ENCODE measurements at regions of chr10 and their contacts with region 1.

Region 1: DNA sequence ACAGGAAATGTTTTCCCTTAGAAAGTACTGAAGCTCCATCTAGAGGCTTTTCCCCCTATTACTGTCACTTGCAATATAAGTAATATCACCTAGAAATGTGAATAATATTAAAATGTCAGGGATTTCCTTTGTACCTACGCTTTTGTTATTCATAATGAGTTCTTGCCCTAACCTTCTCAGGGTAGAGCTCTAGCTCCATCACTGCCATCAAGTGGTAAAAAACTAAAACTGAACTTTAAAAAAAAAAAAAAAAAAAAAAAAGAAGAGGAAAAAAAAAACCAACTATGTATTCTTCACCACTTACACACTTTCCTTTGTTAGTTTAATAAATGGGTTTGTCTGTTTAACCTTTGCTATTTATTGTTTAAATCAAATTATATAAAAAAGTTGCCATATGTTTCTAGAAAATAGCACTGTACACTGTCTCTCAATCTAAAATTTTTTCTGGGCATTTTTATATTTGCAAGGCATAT is 49.9 kb downstream of the DNAJC1 start:
- DNase-seq: peak in 1 of 2 experiments; percentile 79
- H3K4me3 ChIP-seq: no peak overlapping the region
- H3K27ac ChIP-seq: no peak overlapping the region
- H3K4me1 ChIP-seq: no peaks in the 10 kb centered on the region
- H3K27me3 ChIP-seq: no peaks in the 10 kb centered on the region
- CTCF ChIP-seq: peak; percentile 62

Region 2: DNA sequence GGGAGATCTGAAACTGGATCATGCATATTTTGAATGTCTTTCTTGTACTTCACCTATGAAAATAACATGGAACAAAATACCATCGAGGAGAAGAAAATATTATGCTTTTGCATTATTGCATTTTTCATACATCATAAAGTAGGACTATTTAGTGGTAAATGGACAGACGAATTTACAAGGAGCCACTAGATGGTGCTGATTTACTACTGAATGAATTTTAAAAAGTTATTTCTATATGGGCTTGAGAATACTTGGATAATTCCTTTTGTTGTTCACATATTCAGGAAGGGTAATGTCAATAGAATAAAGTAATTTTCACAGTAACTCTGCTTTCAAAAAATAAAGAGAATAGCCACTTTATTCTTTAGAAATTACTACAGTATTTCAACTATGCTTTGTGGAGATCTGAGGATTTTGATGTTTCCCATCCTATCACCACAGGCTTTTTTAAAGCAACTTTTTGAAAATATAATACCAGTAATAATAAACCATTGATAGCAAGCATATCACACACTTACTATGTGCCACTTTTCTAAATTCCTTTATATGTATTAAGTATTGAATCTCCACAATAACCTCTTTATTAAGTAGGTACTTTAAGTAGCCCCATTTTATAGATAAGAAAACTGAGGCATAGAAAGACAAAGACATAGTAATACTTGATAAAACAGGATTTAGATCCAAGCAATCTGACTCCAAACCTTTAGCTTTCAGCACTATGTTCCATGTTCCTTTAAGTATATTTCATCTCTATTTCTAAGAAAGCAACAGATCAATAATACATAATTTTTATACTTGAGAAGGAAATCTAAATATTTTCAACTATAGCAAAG is 1095.1 kb before region 1 on chr10:
- CTCF ChIA-PET with region 1: no interaction called
- POLR2A ChIA-PET with region 1: no interaction called
- intact Hi-C with region 1: loop called (anchors 1 kb)
- DNase-seq: peak in 1 of 2 experiments; percentile 55
- H3K4me3 ChIP-seq: no peak overlapping the region
- H3K27ac ChIP-seq: no peak overlapping the region
- H3K4me1 ChIP-seq: no peaks in the 10 kb centered on the region
- H3K27me3 ChIP-seq: no peaks in the 10 kb centered on the region
- CTCF ChIP-seq: peak; percentile 73

Region 3: DNA sequence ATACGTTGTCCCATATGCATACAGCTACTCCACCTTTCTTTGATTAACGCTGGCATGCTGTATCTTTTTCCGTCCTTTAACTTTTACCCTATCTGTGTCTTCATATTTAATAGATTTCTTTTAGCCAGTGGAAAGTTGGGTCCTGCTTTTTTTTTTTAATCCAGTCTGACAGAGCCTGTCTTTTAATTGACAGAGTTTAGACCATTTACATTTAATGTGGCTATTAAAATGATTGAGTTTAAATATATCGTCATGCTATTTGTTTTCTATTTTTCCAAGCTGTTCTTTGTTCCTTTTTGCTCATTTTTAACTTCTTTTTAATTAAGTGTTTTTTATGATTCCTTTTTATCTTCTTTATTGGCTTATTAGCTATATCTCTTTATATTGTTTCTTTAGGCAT is 838.9 kb before region 1 on chr10:
- CTCF ChIA-PET with region 1: no interaction called
- POLR2A ChIA-PET with region 1: no interaction called
- intact Hi-C with region 1: no loop called
- DNase-seq: no peak
- H3K4me3 ChIP-seq: no peak overlapping the region
- H3K27ac ChIP-seq: no peak overlapping the region
- H3K4me1 ChIP-seq: no peaks in the 10 kb centered on the region
- H3K27me3 ChIP-seq: no peaks in the 10 kb centered on the region
- CTCF ChIP-seq: no peak

Region 4: GRCh38 chr10:21270976-21271375 is 682.6 kb before region 1 on chr10:
- CTCF ChIA-PET with region 1: no interaction called
- POLR2A ChIA-PET with region 1: no interaction called
- intact Hi-C with region 1: loop called (anchors 2 kb)
- DNase-seq: no peak
- H3K4me3 ChIP-seq: no peak overlapping the region
- H3K27ac ChIP-seq: no peak overlapping the region
- H3K4me1 ChIP-seq: peaks cover 22% of the 10 kb centered on the region
- H3K27me3 ChIP-seq: no peaks in the 10 kb centered on the region
- CTCF ChIP-seq: no peak

Region 5: GRCh38 chr10:21525367-21526183 is 428.0 kb before region 1 on chr10 and contains the start of gene SKIDA1:
- CTCF ChIA-PET with region 1: no interaction called
- POLR2A ChIA-PET with region 1: no interaction called
- intact Hi-C with region 1: loop called (anchors 10 kb)
- DNase-seq: peak; percentile 85
- H3K4me3 ChIP-seq: peak within 1 kb of the TSS; percentile 71
- H3K27ac ChIP-seq: peak within 1 kb of the TSS; percentile 79
- H3K4me1 ChIP-seq: peaks cover 32% of the 10 kb centered on the region
- H3K27me3 ChIP-seq: no peaks in the 10 kb centered on the region
- CTCF ChIP-seq: no peak
- total RNA-seq, gene SKIDA1: 0.65 and 1.1 TPM in 2 replicates

Region 6: DNA sequence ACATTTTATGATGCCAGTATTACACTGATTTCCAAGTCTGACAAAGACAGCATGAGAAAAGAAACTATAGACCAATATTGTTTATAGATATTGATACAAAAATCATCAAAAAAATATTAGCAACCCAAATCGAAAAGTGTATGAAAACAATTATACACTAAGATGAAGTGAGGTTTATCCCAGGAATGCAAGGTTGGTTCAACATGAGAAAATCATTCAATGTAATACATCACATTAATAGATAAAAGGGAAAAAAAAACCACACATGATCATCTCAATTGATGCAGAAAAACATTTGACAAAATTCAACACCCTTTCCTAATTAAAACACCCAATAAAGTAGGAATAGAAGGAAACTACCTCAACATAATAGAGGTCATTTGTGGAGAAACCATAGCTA is 104.0 kb before region 1 on chr10:
- CTCF ChIA-PET with region 1: no interaction called
- POLR2A ChIA-PET with region 1: no interaction called
- intact Hi-C with region 1: no loop called
- DNase-seq: no peak
- H3K4me3 ChIP-seq: no peak overlapping the region
- H3K27ac ChIP-seq: no peak overlapping the region
- H3K4me1 ChIP-seq: no peaks in the 10 kb centered on the region
- H3K27me3 ChIP-seq: no peaks in the 10 kb centered on the region
- CTCF ChIP-seq: no peak

Region 7: GRCh38 chr10:22034333-22034732 is 80.7 kb after region 1 on chr10:
- CTCF ChIA-PET with region 1: no interaction called
- POLR2A ChIA-PET with region 1: no interaction called
- intact Hi-C with region 1: no loop called
- DNase-seq: no peak
- H3K4me3 ChIP-seq: no peak overlapping the region
- H3K27ac ChIP-seq: no peak overlapping the region
- H3K4me1 ChIP-seq: no peaks in the 10 kb centered on the region
- H3K27me3 ChIP-seq: no peaks in the 10 kb centered on the region
- CTCF ChIP-seq: no peak

Region 8: DNA sequence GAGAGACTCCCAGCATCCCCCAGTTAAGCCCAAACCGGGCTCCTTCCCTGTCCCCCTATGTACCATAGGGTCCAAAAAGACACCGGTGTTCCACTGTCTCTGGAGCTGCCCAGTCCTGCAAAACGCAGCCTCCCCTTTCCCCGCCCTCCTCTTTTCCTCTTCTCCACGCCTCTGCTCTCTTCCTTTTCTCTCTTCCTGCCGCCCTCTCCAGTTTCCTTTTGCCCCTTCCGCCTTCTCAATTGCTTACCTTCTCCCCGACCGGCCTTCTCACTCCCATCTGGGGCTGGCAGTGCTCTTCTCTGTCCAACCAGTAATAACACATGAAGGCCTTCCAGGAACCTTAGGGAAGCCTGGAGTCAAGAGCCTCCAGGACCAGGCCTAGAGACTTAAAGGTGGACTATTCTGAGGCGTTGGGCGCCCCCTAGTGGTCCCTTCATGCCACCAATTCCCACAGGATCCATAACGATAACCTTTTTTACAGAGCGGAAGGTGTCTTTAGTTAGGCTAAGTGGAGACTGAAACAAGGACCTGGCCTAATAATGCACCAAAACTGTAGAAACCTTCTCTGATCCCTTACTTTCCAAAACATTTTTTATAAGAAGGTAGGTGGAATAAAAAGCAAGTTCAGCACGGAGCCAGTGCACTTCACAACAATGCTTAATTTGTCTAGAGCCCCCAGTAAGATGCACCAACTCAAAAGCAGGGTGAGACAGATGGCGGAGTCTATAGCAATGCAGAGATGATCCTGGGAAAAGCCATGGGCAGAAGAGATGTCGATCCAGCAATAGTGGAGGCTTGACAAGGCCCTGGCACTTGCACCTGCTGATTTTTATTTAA is 1114.5 kb after region 1 on chr10:
- CTCF ChIA-PET with region 1: interaction called, 20 read pairs
- POLR2A ChIA-PET with region 1: no interaction called
- intact Hi-C with region 1: no loop called
- DNase-seq: peak; percentile 43 to 59
- H3K4me3 ChIP-seq: no peak overlapping the region
- H3K27ac ChIP-seq: no peak overlapping the region
- H3K4me1 ChIP-seq: no peaks in the 10 kb centered on the region
- H3K27me3 ChIP-seq: no peaks in the 10 kb centered on the region
- CTCF ChIP-seq: peak; percentile 84